ENCODE measurements at regions of chr7 and their contacts with region 1.

Region 1: DNA sequence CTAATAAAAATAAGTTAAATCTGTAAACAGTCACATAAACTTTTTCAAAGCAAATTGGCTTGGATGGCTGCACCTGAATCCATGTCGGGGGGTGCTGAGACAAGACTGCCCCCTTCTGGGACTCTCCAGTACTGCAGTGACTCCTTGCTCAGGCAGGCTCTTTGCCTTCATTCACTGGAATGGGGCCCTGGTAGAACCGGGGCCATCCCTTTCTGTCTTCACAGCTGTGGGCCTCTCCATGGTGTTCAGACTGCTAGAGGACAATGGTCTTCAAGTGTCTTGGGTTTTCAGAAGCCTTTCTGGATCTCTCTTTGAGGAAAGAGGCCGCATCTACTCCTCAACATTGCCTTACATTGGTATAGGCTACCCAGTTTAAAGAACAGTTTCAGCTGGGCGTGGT is 16.1 kb upstream of the IMPDH1 start:
- DNase-seq: peak; percentile 91
- ATAC-seq: peak; percentile 67
- H3K4me3 Mint-ChIP-seq: no peak overlapping the region
- H3K27ac Mint-ChIP-seq: no peak overlapping the region
- H3K4me1 Mint-ChIP-seq: peaks cover 2% of the 10 kb centered on the region; the same call in 1 of the 2 replicates
- H3K27me3 Mint-ChIP-seq: no peaks in the 10 kb centered on the region
- CTCF ChIP-seq: peak; percentile 94

Region 2: GRCh38 chr7:127844707-127845331 is 581.0 kb before region 1 on chr7:
- CTCF ChIA-PET with region 1: no interaction called
- POLR2A ChIA-PET with region 1: no interaction called
- DNase-seq: no peak
- ATAC-seq: no peak
- H3K4me3 Mint-ChIP-seq: no peak overlapping the region
- H3K27ac Mint-ChIP-seq: peak overlapping the region; percentile 20; the same call in 1 of the 2 replicates
- H3K4me1 Mint-ChIP-seq: peaks cover 38% of the 10 kb centered on the region
- H3K27me3 Mint-ChIP-seq: no peaks in the 10 kb centered on the region
- CTCF ChIP-seq: no peak

Region 3: GRCh38 chr7:128242616-128243015 is 183.2 kb before region 1 on chr7:
- CTCF ChIA-PET with region 1: no interaction called
- POLR2A ChIA-PET with region 1: no interaction called
- DNase-seq: no peak
- ATAC-seq: no peak
- H3K4me3 Mint-ChIP-seq: no peak overlapping the region
- H3K27ac Mint-ChIP-seq: no peak overlapping the region
- H3K4me1 Mint-ChIP-seq: no peaks in the 10 kb centered on the region
- H3K27me3 Mint-ChIP-seq: peaks cover 10% of the 10 kb centered on the region; the same call in 1 of the 2 replicates
- CTCF ChIP-seq: no peak

Region 4: DNA sequence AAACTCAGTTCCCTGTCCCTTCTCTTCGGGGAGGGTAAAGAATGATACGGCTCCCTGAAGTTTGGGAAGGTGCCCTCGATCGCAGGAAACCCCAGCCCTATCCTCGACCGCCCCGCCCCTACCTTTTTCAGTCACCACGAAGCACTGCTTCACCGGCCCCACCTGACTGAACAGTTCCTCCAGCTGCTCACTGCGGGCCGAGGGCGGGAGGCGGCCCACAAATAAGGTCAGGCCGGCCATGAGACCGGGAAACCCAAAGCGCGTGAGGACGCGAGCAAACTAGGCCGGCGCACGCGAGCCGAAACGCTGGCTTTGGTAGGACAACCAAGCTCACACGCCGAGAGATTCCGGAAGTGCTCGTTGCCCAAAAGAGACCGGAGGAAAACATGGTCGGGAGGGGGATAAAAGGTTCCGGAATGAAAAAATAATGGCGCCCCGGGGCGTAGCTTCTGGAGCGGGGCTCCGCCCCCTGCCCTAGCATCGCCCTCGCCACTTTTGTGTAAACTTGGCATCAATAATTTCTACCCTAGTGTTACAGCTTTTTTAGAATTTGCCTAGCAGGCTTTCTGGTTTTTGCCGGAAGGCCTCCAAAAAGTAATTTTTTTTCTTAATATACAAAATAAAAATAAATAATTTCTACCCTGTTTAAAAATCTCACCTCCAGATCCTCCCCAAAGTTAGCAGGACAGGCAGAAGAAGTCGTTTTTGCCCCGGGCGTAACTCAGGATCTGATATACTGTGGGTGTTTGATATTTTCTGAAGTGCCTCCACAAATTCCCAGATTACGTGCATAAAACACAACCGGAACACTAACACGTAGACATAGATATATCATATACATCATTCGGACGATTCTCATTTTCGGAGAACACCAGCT is 82.1 kb before region 1 on chr7 and contains the start of gene RBM28:
- CTCF ChIA-PET with region 1: interaction called, 43 read pairs
- POLR2A ChIA-PET with region 1: interaction called, 3 read pairs
- DNase-seq: peak; percentile 81
- ATAC-seq: peak; percentile 92
- H3K4me3 Mint-ChIP-seq: peak within 1 kb of the TSS; percentile 91
- H3K27ac Mint-ChIP-seq: peak within 1 kb of the TSS; percentile 91
- H3K4me1 Mint-ChIP-seq: peaks cover 11% of the 10 kb centered on the region
- H3K27me3 Mint-ChIP-seq: peaks cover 20% of the 10 kb centered on the region
- CTCF ChIP-seq: no peak
- total RNA-seq, gene RBM28: 51.5 to 66.1 TPM (median 56.2 TPM) in 3 replicates

Region 5: DNA sequence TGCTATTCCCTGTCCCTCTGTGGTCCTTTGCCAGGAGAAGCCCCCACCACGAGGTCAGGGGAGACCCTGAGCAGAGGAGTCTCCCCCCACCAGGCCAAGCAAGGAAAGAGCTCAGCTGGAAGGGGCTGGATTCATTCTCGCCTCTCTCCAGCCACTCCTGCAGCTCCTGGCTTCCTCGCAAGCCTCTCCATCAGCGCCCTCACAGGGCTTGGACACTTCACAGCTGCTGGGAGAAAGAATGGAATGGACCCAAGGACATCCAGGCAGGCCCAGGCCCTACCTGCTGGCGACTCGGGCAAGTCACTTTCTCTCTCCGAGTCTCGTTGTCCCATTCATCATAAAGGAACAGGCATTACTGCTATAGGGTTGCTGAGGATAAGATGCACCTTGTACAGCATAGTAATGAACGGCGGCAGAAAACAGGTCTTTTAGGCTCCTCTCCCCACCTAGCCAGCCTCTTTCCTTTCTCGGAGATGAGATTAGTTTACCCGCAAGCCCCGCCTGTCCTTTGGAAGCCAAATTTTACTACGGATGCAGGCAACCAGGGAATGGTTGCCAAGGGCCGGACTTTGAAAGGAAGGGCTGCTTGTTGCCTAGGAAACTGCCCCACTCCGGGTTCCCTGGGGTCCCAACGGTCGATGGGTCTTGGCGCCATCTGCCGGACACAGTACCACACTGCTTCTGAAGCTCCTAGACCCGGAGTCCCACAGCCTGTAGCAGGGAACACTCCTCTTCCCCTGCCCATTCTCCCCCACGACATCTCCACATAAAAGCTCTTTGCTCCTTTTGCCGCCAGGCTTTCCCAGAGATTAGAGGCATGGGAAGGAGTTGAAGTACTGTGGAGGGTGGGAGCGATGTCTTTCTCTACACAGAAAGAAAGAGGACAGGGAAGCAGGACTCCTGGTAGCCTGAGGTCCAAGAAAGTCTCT is 38.4 kb before region 1 on chr7:
- CTCF ChIA-PET with region 1: interaction called, 31 read pairs
- POLR2A ChIA-PET with region 1: no interaction called
- DNase-seq: peak; percentile 94
- ATAC-seq: peak; percentile 88
- H3K4me3 Mint-ChIP-seq: no peak overlapping the region
- H3K27ac Mint-ChIP-seq: no peak overlapping the region
- H3K4me1 Mint-ChIP-seq: peaks cover 13% of the 10 kb centered on the region
- H3K27me3 Mint-ChIP-seq: peaks cover 25% of the 10 kb centered on the region
- CTCF ChIP-seq: peak; percentile 73

Region 6: GRCh38 chr7:128409596-128410160 is 16.2 kb before region 1 on chr7 and contains the start of gene IMPDH1:
- CTCF ChIA-PET with region 1: interaction called, 47 read pairs
- POLR2A ChIA-PET with region 1: no interaction called
- DNase-seq: peak; percentile 92
- ATAC-seq: peak; percentile 82
- H3K4me3 Mint-ChIP-seq: peak within 1 kb of the TSS; percentile 91
- H3K27ac Mint-ChIP-seq: no peak within 1 kb of the TSS; the same call in 1 of the 2 replicates
- H3K4me1 Mint-ChIP-seq: peaks cover 29% of the 10 kb centered on the region
- H3K27me3 Mint-ChIP-seq: peaks cover 86% of the 10 kb centered on the region
- CTCF ChIP-seq: no peak
- total RNA-seq, gene IMPDH1: 42.8 to 54.2 TPM (median 44.1 TPM) in 3 replicates

Region 7: DNA sequence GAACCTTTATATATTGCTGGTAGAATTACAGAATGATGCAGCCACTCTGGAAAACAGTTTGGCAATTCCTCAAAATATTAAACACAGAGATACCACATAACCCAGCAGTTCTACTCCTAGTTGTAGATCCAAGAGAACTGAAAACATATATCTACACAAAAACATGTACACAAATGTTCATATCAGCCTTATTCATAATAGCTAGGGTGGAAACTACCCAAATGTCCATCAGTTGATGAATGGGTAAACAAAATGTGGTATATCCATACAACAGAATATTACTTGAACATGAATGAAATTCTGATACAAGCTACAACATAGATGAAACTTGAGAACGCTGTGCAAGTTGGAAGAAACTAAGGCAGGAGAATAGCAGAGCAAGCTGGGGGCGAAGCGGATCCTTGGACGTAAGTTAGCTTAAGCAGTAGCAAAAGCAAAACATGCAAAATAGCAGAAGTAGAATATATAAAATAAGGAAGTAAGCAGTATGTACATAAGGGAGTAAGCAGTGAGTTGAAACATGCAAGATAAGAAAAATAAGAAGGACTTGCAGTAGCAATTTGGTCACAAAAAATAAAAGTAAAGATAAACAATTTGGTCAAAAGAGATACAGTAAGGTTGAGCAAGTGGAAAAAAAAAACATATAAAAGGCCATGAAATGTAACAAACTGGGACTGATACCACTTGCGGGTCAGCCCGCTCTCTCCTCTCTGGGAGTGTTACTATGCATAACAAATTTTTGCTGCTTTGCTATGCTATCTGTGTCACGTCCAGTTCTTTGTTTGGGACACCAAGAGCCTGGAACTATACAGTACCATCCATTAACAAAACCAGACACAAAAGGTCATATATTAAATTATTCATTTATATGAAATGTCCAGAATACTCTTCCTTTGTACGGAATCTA is 11.8 kb after region 1 on chr7:
- CTCF ChIA-PET with region 1: interaction called, 33 read pairs
- POLR2A ChIA-PET with region 1: no interaction called
- DNase-seq: no peak
- ATAC-seq: no peak
- H3K4me3 Mint-ChIP-seq: no peak overlapping the region
- H3K27ac Mint-ChIP-seq: no peak overlapping the region
- H3K4me1 Mint-ChIP-seq: peaks cover 17% of the 10 kb centered on the region
- H3K27me3 Mint-ChIP-seq: no peaks in the 10 kb centered on the region
- CTCF ChIP-seq: no peak

Region 8: GRCh38 chr7:128666200-128666599 is 240.3 kb after region 1 on chr7:
- CTCF ChIA-PET with region 1: interaction called, 12 read pairs
- POLR2A ChIA-PET with region 1: no interaction called
- DNase-seq: no peak
- ATAC-seq: no peak
- H3K4me3 Mint-ChIP-seq: no peak overlapping the region
- H3K27ac Mint-ChIP-seq: no peak overlapping the region
- H3K4me1 Mint-ChIP-seq: no peaks in the 10 kb centered on the region
- H3K27me3 Mint-ChIP-seq: peaks cover 6% of the 10 kb centered on the region; the same call in 1 of the 2 replicates
- CTCF ChIP-seq: no peak